CD4-positive, alpha-beta memory T cell (primary cell): ENCODE measurements at regions of chr6 and their contacts with region 1.

Region 1: DNA sequence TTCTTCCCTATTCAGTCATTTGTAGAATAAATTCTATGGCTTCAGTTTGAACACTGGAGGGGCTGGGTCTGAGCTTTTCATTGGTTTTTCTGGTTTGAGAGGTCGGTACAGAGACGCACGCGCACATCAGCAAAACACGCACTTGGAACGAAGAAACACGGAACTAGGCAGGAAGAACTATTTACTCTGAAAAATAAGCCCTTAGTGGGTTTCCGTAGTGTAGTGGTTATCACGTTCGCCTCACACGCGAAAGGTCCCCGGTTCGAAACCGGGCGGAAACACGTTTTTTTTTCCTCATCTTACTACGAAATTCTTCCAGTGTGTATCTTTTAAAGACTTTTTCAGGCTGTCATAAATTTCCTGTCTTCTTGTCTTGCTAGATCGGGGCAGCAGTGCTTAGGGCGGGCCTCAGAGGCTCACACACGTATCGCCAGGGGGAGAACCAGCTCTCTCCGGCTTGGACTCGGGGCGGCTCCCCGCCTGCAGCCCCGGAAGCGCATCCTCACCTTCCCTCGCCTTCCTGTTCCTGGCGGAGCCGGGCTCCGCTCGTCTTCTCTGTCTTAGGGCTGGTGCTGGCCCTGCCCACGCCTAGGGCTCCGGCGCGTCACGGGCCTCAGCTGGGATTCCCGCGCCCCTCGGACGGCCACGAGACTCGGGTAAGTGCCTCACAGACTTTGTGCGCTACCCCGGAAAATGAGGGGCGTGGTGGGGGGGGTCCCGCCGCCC is at the start of gene HMGN4:
- DNase-seq: peak; percentile 92 to 96 (median 95)
- H3K4me3 ChIP-seq: peak within 1 kb of the TSS; percentile 83 to 90
- H3K4me3 Mint-ChIP-seq: peak within 1 kb of the TSS; percentile 89 to 98 (median 93)
- H3K27ac ChIP-seq: peak within 1 kb of the TSS; percentile 90
- H3K27ac Mint-ChIP-seq: peak within 1 kb of the TSS; percentile 94 to 99 (median 97)
- H3K4me1 ChIP-seq: peaks cover 66% of the 10 kb centered on the region
- H3K4me1 Mint-ChIP-seq: peaks cover 38 to 76% (median 56%) of the 10 kb centered on the region in 4 donors
- H3K27me3 ChIP-seq: no peaks in the 10 kb centered on the region
- H3K27me3 Mint-ChIP-seq: peaks cover 3 to 6% of the 10 kb centered on the region in 2 donors
- total RNA-seq, gene HMGN4: 102 to 105 TPM

Region 2: GRCh38 chr6:24960991-24961475 is 1577.0 kb before region 1 on chr6:
- CTCF ChIA-PET with region 1: no interaction called
- POLR2A ChIA-PET with region 1: no interaction called
- intact Hi-C with region 1: no loop called
- DNase-seq: peak in 4 of 5 donors; percentile 40 to 58 (median 47)
- H3K4me3 ChIP-seq: no peak overlapping the region
- H3K4me3 Mint-ChIP-seq: peak overlapping the region; percentile 4 to 79 (median 64)
- H3K27ac ChIP-seq: peak overlapping the region; percentile 12
- H3K27ac Mint-ChIP-seq: peak overlapping the region; percentile 74 to 97 (median 91)
- H3K4me1 ChIP-seq: peaks cover 96% of the 10 kb centered on the region
- H3K4me1 Mint-ChIP-seq: peaks cover 68 to 90% (median 78%) of the 10 kb centered on the region in 4 donors
- H3K27me3 ChIP-seq: no peaks in the 10 kb centered on the region
- H3K27me3 Mint-ChIP-seq: no peaks in the 10 kb centered on the region

Region 3: DNA sequence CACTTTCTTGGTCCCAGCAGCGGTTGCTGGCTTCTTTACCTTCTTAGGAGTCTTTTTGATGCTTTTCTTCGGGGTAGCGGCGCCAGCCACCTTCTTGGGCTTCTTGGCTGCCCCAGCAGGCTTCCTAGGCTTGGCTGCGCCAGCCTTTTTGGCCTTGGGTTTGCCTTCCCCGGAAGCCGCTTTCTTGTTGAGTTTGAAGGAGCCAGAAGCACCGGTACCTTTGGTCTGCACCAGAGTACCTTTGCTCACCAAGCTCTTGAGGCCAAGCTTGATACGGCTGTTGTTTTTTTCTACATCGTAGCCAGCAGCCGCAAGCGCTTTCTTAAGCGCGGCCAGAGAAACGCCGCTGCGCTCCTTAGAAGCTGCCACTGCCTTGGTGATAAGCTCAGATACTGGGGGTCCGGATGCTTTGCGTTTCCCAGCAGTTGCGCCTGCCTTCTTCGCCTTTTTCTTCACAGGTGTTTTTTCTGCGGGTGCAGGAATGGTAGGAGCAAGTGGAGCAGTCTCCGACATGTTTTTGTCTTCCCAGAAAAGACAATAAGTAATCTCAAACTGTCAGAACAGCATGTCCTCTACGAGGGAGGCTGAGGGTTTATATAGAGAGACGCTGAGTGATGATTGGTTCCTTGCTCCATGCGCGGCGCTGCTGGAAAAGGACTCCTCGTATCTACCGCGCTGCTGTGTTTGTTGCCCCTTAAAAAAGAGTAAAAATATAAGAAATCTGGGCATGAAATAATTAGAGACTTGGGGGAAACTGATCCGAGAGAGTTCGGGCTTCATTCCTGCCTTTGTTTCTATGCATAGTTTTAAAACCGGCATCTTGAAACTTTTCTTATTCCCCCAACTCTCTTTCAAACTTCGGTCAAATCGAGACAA is 303.4 kb before region 1 on chr6:
- CTCF ChIA-PET with region 1: no interaction called
- POLR2A ChIA-PET with region 1: interaction called, 14 read pairs
- intact Hi-C with region 1: no loop called
- DNase-seq: peak; percentile 70 to 87 (median 85)
- H3K4me3 ChIP-seq: peak overlapping the region; percentile 66 to 95
- H3K4me3 Mint-ChIP-seq: peak overlapping the region; percentile 93 to 99 (median 96)
- H3K27ac ChIP-seq: peak overlapping the region; percentile 83
- H3K27ac Mint-ChIP-seq: peak overlapping the region; percentile 90 to 99 (median 96)
- H3K4me1 ChIP-seq: peaks cover 23% of the 10 kb centered on the region
- H3K4me1 Mint-ChIP-seq: peaks cover 18 to 43% (median 26%) of the 10 kb centered on the region in 4 donors
- H3K27me3 ChIP-seq: no peaks in the 10 kb centered on the region
- H3K27me3 Mint-ChIP-seq: no peaks in the 10 kb centered on the region

Region 4: DNA sequence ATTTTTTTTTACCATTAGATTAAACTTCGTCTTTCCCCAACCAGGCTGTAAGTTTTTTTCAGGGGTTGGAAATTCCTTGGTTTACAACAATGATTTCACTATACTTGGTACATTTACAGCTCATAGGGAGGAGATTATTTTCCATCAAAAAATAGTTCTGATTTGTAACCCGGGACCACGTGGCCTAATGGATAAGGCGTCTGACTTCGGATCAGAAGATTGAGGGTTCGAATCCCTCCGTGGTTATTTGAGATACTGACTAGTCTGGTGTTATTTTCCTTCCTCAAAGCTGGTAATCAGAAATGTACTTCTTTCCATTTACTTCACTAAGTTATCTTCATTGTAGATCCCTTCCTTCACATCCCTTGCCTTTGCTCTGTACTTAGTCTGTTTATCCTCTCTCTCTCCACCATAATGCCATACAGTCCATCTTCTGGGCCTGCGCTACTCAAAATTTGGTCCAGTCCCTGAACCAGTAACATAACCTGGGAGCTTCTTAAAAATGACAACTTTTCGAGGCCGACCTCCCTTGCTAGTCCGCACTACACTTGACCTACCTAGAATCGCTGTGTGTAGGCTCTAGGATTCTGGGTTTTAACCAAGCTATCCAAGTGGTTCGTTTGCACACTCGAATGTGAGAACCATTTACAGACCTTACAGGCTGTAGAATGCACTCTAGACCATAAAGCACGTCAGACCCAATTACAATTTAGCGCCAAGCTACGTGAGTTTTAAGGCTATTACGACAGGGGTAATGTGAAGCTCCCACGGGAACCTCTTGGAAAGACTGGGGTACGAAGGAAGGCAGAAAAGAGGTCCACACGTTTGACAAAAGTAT is 215.1 kb before region 1 on chr6:
- CTCF ChIA-PET with region 1: interaction called, 3 read pairs
- POLR2A ChIA-PET with region 1: interaction called, 10 read pairs
- intact Hi-C with region 1: no loop called
- DNase-seq: peak; percentile 75 to 80 (median 79)
- H3K4me3 ChIP-seq: peak overlapping the region in 1 of 2 donors; percentile 62
- H3K4me3 Mint-ChIP-seq: peak overlapping the region; percentile 86 to 92 (median 88)
- H3K27ac ChIP-seq: no peak overlapping the region
- H3K27ac Mint-ChIP-seq: peak overlapping the region; percentile 42 to 98 (median 82)
- H3K4me1 ChIP-seq: peaks cover 12% of the 10 kb centered on the region
- H3K4me1 Mint-ChIP-seq: peaks cover 19 to 30% (median 24%) of the 10 kb centered on the region in 4 donors
- H3K27me3 ChIP-seq: no peaks in the 10 kb centered on the region
- H3K27me3 Mint-ChIP-seq: peaks cover 8 to 22% of the 10 kb centered on the region in 2 donors

Region 5: GRCh38 chr6:26401987-26402658 is 135.9 kb before region 1 on chr6 and contains the start of gene BTN3A1:
- CTCF ChIA-PET with region 1: no interaction called
- POLR2A ChIA-PET with region 1: interaction called, 3 read pairs
- intact Hi-C with region 1: loop called (anchors 5 kb)
- DNase-seq: peak; percentile 80 to 84 (median 81)
- H3K4me3 ChIP-seq: peak within 1 kb of the TSS; percentile 91 to 94
- H3K4me3 Mint-ChIP-seq: peak within 1 kb of the TSS; percentile 97 to 100 (median 99)
- H3K27ac ChIP-seq: peak within 1 kb of the TSS; percentile 89
- H3K27ac Mint-ChIP-seq: peak within 1 kb of the TSS; percentile 95 to 100 (median 99)
- H3K4me1 ChIP-seq: peaks cover 51% of the 10 kb centered on the region
- H3K4me1 Mint-ChIP-seq: peaks cover 41 to 58% (median 47%) of the 10 kb centered on the region in 4 donors
- H3K27me3 ChIP-seq: no peaks in the 10 kb centered on the region
- H3K27me3 Mint-ChIP-seq: no peaks in the 10 kb centered on the region
- total RNA-seq, gene BTN3A1: 255 to 262 TPM

Region 6: GRCh38 chr6:26501482-26501986 is 36.5 kb before region 1 on chr6:
- CTCF ChIA-PET with region 1: no interaction called
- POLR2A ChIA-PET with region 1: interaction called, 14 read pairs
- intact Hi-C with region 1: no loop called
- DNase-seq: peak; percentile 29 to 56 (median 34)
- H3K4me3 ChIP-seq: peak overlapping the region in 1 of 2 donors; percentile 9
- H3K4me3 Mint-ChIP-seq: peak overlapping the region; percentile 76 to 88 (median 81)
- H3K27ac ChIP-seq: no peak overlapping the region
- H3K27ac Mint-ChIP-seq: peak overlapping the region in 5 of 7 donors; percentile 9 to 72 (median 41)
- H3K4me1 ChIP-seq: peaks cover 13% of the 10 kb centered on the region
- H3K4me1 Mint-ChIP-seq: peaks cover 10 to 19% (median 13%) of the 10 kb centered on the region in 4 donors
- H3K27me3 ChIP-seq: peaks cover 13% of the 10 kb centered on the region
- H3K27me3 Mint-ChIP-seq: peaks cover 13% of the 10 kb centered on the region in 2 donors

Region 7: DNA sequence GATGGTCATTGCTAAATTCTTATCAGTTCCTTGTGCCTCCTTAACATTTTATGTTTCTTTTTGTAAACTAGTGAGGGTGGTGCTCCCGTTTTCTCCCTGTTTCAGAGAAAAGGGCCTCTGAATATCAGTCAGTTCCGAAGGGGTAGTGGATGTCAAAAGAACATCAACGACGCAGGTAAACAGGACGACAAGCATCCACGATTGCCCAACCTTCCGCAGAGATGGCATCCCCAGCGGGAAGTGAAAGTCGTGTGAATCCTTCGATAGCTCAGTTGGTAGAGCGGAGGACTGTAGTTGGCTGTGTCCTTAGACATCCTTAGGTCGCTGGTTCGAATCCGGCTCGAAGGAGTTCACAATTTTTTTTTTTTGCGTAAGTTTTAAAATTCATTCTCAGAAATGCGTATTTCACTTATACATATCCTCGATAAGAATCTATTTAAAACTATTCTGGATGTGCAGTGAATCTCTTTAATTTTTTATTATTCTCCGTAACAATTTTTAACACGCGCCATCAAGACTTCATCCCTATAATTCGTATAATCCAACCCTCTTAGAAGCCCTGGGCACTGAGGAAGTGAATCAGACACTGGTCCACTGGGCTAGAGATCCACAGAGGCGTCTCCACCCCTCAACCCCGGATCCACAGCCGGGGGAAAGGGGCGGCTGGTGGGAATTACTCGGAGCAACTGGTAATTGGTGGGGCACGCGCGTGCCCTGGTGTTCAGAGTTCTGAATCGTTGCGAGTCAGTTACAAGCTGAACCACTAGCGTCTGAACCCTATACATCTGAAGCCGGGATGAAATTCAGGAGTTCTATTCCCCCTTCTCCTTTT is 30.8 kb after region 1 on chr6:
- CTCF ChIA-PET with region 1: interaction called, 14 read pairs
- POLR2A ChIA-PET with region 1: interaction called, 80 read pairs
- intact Hi-C with region 1: loop called (anchors 1 kb)
- DNase-seq: peak; percentile 96 to 98 (median 97)
- H3K4me3 ChIP-seq: peak overlapping the region; percentile 74 to 82
- H3K4me3 Mint-ChIP-seq: peak overlapping the region; percentile 94 to 99 (median 96)
- H3K27ac ChIP-seq: peak overlapping the region; percentile 62
- H3K27ac Mint-ChIP-seq: peak overlapping the region; percentile 92 to 100 (median 98)
- H3K4me1 ChIP-seq: peaks cover 9% of the 10 kb centered on the region
- H3K4me1 Mint-ChIP-seq: peaks cover 17 to 34% (median 23%) of the 10 kb centered on the region in 4 donors
- H3K27me3 ChIP-seq: no peaks in the 10 kb centered on the region
- H3K27me3 Mint-ChIP-seq: peaks cover 0 to 10% of the 10 kb centered on the region in 2 donors

Region 8: GRCh38 chr6:28506807-28507475 is 1968.9 kb after region 1 on chr6:
- CTCF ChIA-PET with region 1: no interaction called
- POLR2A ChIA-PET with region 1: no interaction called
- intact Hi-C with region 1: no loop called
- DNase-seq: peak in 1 of 5 donors; percentile 17
- H3K4me3 ChIP-seq: no peak overlapping the region
- H3K4me3 Mint-ChIP-seq: peak overlapping the region in 7 of 8 donors; percentile 2 to 61 (median 5)
- H3K27ac ChIP-seq: no peak overlapping the region
- H3K27ac Mint-ChIP-seq: peak overlapping the region in 6 of 7 donors; percentile 6 to 72 (median 64)
- H3K4me1 ChIP-seq: peaks cover 14% of the 10 kb centered on the region
- H3K4me1 Mint-ChIP-seq: peaks cover 9 to 18% (median 15%) of the 10 kb centered on the region in 4 donors
- H3K27me3 ChIP-seq: no peaks in the 10 kb centered on the region
- H3K27me3 Mint-ChIP-seq: peaks cover 7 to 16% of the 10 kb centered on the region in 2 donors